CD8-positive, alpha-beta memory T cell (primary cell): ENCODE measurements at regions of chr1 and their contacts with region 1.

Region 1: GRCh38 chr1:28581536-28582247 is 10.4 kb upstream of the RAB42 start:
- DNase-seq: peak; percentile 86 to 95 (median 91)
- H3K4me3 ChIP-seq: peak overlapping the region; percentile 87
- H3K4me3 Mint-ChIP-seq: peak overlapping the region; percentile 93 to 99 (median 98)
- H3K27ac ChIP-seq: peak overlapping the region; percentile 89
- H3K27ac Mint-ChIP-seq: peak overlapping the region; percentile 84 to 98 (median 94)
- H3K4me1 ChIP-seq: peaks cover 31% of the 10 kb centered on the region
- H3K4me1 Mint-ChIP-seq: peaks cover 36 to 55% (median 52%) of the 10 kb centered on the region in 3 donors
- H3K27me3 ChIP-seq: no peaks in the 10 kb centered on the region
- H3K27me3 Mint-ChIP-seq: peaks cover 0 to 2% of the 10 kb centered on the region in 2 donors

Region 2: DNA sequence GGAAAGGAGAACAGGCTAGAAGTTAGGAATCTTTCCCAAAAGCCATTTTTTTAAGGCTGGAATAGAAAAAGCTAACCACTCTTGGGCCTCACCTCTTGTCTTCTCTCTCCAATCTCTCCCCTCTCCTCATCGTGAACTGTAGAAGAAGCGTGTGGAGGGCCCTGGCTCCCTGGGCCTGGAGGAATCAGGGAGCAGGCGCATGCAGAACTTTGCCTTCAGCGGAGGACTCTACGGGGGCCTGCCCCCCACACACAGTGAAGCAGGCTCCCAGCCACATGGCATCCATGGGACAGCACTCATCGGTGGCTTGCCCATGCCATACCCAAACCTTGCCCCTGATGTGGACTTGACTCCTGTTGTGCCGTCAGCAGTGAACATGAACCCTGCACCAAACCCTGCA is 731.7 kb before region 1 on chr1:
- CTCF ChIA-PET with region 1: no interaction called
- POLR2A ChIA-PET with region 1: no interaction called
- DNase-seq: peak in 1 of 5 donors; percentile 15
- H3K4me3 ChIP-seq: no peak overlapping the region
- H3K4me3 Mint-ChIP-seq: no peak overlapping the region
- H3K27ac ChIP-seq: no peak overlapping the region
- H3K27ac Mint-ChIP-seq: peak overlapping the region in 2 of 8 donors; percentile 11 to 37
- H3K4me1 ChIP-seq: no peaks in the 10 kb centered on the region
- H3K4me1 Mint-ChIP-seq: no peaks in the 10 kb centered on the region
- H3K27me3 ChIP-seq: no peaks in the 10 kb centered on the region
- H3K27me3 Mint-ChIP-seq: no peaks in the 10 kb centered on the region

Region 3: DNA sequence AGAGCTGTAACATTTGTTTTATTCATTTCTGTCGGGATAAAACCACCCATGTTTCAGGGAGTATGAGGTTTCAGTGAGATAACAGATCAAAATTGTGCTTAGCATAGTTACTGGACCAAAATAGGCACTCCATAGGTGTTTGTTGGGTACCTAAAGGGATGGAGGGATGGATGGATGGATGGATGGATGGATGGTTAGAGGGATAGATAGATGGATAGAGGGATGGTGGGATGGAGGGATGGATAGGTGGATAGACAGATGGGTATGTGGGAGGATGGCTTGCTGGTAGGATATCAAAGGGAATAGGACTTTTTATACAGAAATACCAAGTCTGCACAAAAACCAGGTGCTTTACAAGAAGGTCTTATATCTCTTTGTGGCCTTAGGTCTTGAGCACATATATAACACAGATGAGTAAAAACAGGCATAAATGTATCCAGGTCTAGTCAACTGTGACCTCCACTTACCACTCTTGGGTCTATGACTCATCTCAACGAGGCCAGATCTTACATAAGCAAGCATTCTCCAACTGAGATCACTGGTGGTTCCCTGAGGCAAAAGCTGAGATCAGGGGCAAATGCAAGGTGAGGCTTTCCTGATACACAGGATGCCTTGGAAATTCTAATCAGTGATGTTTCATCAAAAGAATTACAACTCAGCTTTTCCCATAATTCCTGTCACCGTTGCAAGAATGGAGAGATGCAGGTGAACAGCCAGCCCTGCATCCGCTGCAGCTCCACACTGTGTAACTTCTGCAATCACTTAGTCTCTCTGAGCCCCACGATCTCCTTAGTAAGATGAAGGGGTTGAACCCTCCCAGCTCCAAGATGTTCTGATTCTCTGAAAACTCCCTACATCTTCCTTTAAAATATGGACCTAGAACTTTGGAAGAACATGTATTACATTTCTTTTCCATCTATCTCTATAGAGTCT is 437.2 kb before region 1 on chr1:
- CTCF ChIA-PET with region 1: no interaction called
- POLR2A ChIA-PET with region 1: no interaction called
- DNase-seq: no peak
- H3K4me3 ChIP-seq: no peak overlapping the region
- H3K4me3 Mint-ChIP-seq: no peak overlapping the region
- H3K27ac ChIP-seq: no peak overlapping the region
- H3K27ac Mint-ChIP-seq: peak overlapping the region in 1 of 8 donors; percentile 0
- H3K4me1 ChIP-seq: no peaks in the 10 kb centered on the region
- H3K4me1 Mint-ChIP-seq: peaks cover 0 to 4% (median 0%) of the 10 kb centered on the region in 3 donors
- H3K27me3 ChIP-seq: no peaks in the 10 kb centered on the region
- H3K27me3 Mint-ChIP-seq: no peaks in the 10 kb centered on the region

Region 4: GRCh38 chr1:28329395-28330153 is 252.1 kb before region 1 on chr1:
- CTCF ChIA-PET with region 1: no interaction called
- POLR2A ChIA-PET with region 1: interaction called, 10 read pairs
- DNase-seq: no peak
- H3K4me3 ChIP-seq: peak overlapping the region; percentile 85
- H3K4me3 Mint-ChIP-seq: peak overlapping the region; percentile 89 to 97 (median 91)
- H3K27ac ChIP-seq: peak overlapping the region; percentile 93
- H3K27ac Mint-ChIP-seq: peak overlapping the region; percentile 95 to 99 (median 98)
- H3K4me1 ChIP-seq: peaks cover 17% of the 10 kb centered on the region
- H3K4me1 Mint-ChIP-seq: peaks cover 26 to 42% (median 42%) of the 10 kb centered on the region in 3 donors
- H3K27me3 ChIP-seq: no peaks in the 10 kb centered on the region
- H3K27me3 Mint-ChIP-seq: peaks cover 0 to 5% of the 10 kb centered on the region in 2 donors

Region 5: GRCh38 chr1:28518000-28518744 is 63.5 kb before region 1 on chr1:
- CTCF ChIA-PET with region 1: interaction called, 16 read pairs
- POLR2A ChIA-PET with region 1: interaction called, 8 read pairs
- DNase-seq: peak; percentile 79 to 90 (median 83)
- H3K4me3 ChIP-seq: peak overlapping the region; percentile 78
- H3K4me3 Mint-ChIP-seq: peak overlapping the region; percentile 84 to 96 (median 89)
- H3K27ac ChIP-seq: peak overlapping the region; percentile 75
- H3K27ac Mint-ChIP-seq: peak overlapping the region; percentile 76 to 94 (median 87)
- H3K4me1 ChIP-seq: peaks cover 18% of the 10 kb centered on the region
- H3K4me1 Mint-ChIP-seq: peaks cover 26 to 28% (median 27%) of the 10 kb centered on the region in 3 donors
- H3K27me3 ChIP-seq: no peaks in the 10 kb centered on the region
- H3K27me3 Mint-ChIP-seq: peaks cover 0 to 3% of the 10 kb centered on the region in 2 donors

Region 6: GRCh38 chr1:28631713-28632112 is 50.0 kb after region 1 on chr1:
- CTCF ChIA-PET with region 1: no interaction called
- POLR2A ChIA-PET with region 1: no interaction called
- DNase-seq: no peak
- H3K4me3 ChIP-seq: no peak overlapping the region
- H3K4me3 Mint-ChIP-seq: no peak overlapping the region
- H3K27ac ChIP-seq: no peak overlapping the region
- H3K27ac Mint-ChIP-seq: peak overlapping the region in 2 of 8 donors; percentile 21 to 54
- H3K4me1 ChIP-seq: no peaks in the 10 kb centered on the region
- H3K4me1 Mint-ChIP-seq: peaks cover 8 to 20% (median 12%) of the 10 kb centered on the region in 3 donors
- H3K27me3 ChIP-seq: no peaks in the 10 kb centered on the region
- H3K27me3 Mint-ChIP-seq: no peaks in the 10 kb centered on the region

Region 7: DNA sequence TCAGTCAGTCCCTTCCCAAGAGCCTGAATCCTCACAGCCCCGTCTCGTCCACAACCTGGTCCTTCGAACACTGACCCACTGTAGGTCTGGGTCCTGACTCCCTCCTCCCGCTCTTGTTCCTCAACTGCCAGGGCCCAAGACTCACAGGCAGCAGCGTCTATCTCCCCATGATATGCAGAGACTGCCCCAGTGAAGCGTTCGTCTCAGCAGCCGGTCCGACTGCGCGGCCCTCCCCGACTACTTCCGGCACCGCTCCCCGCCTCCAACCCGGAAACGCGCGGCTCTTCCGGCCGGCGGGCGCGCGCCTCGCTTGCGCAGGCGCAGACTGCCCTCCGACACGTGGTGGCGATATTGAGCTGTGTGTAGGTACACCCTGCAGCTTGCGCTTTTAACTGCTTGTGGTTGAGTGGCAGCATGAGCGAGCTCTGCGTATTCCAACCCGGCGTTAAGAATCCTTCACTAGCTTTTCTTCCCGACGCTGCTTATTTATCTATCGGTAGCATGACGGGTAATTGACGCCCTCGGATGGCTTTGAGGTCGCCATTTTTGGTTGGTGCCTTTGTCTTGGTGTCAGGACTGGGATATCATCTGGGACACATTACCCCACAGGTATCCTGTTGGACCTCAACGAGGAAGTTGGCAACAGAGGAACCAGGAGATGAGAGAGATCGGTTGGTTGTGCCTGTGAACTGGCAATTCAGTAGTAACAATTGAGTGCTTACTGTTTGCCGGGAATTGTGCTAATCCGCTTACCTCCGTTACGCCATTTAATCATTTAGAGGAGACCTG is 61.3 kb after region 1 on chr1 and contains the start of gene TAF12:
- CTCF ChIA-PET with region 1: interaction called, 7 read pairs
- POLR2A ChIA-PET with region 1: interaction called, 49 read pairs
- DNase-seq: peak; percentile 86 to 95 (median 89)
- H3K4me3 ChIP-seq: peak within 1 kb of the TSS; percentile 98
- H3K4me3 Mint-ChIP-seq: peak within 1 kb of the TSS; percentile 94 to 99 (median 98)
- H3K27ac ChIP-seq: peak within 1 kb of the TSS; percentile 91
- H3K27ac Mint-ChIP-seq: peak within 1 kb of the TSS; percentile 91 to 100 (median 98)
- H3K4me1 ChIP-seq: peaks cover 40% of the 10 kb centered on the region
- H3K4me1 Mint-ChIP-seq: peaks cover 46 to 67% (median 56%) of the 10 kb centered on the region in 3 donors
- H3K27me3 ChIP-seq: no peaks in the 10 kb centered on the region
- H3K27me3 Mint-ChIP-seq: peaks cover 0 to 4% of the 10 kb centered on the region in 2 donors
- total RNA-seq, gene TAF12: 37.8 to 39.0 TPM

Region 8: DNA sequence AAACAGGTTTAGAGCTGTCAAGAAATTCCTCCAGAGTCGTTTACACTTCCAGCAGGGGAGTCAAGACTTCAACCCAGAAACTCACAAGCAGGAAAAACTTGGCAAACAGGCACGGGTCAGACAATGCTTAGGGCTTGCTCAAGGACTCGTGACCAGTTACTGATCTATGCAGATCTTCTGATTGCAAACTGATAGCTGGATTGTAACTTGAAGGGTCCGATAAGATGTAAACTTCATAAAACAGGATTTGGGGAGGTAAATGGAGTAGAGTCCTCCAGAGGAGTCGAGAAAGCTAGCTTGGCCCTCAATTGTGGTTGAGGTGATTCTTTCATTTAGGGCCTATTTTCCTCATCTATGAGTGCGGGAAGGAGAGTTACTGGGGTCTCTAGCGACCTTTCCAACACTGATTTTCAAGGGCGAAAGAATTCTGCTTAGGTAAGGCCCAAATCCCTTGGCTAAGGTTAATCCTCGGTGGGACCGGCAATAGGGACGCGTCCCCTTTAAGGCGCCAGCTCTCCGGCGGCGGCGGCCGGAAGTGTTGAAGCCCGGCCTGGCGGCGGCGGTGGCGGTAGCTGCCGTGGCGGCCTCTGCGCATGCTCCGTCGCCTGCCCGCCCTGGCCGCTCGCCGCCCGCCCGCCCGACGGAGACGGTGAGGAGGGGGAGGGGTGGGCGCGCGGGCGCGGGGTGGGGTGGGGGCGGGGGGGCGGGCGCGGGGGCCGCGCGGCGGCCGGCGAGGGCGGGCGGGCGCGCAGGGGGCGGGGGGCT is 86.7 kb after region 1 on chr1 and contains the start of gene GMEB1:
- CTCF ChIA-PET with region 1: interaction called, 10 read pairs
- POLR2A ChIA-PET with region 1: interaction called, 24 read pairs
- DNase-seq: peak; percentile 76 to 90 (median 82)
- H3K4me3 ChIP-seq: peak within 1 kb of the TSS; percentile 93
- H3K4me3 Mint-ChIP-seq: peak within 1 kb of the TSS; percentile 92 to 97 (median 95)
- H3K27ac ChIP-seq: peak within 1 kb of the TSS; percentile 94
- H3K27ac Mint-ChIP-seq: peak within 1 kb of the TSS; percentile 97 to 100 (median 99)
- H3K4me1 ChIP-seq: peaks cover 5% of the 10 kb centered on the region
- H3K4me1 Mint-ChIP-seq: peaks cover 17 to 30% (median 23%) of the 10 kb centered on the region in 3 donors
- H3K27me3 ChIP-seq: no peaks in the 10 kb centered on the region
- H3K27me3 Mint-ChIP-seq: peaks cover 0 to 1% of the 10 kb centered on the region in 2 donors
- total RNA-seq, gene GMEB1: 21.3 to 21.8 TPM

Region 9: DNA sequence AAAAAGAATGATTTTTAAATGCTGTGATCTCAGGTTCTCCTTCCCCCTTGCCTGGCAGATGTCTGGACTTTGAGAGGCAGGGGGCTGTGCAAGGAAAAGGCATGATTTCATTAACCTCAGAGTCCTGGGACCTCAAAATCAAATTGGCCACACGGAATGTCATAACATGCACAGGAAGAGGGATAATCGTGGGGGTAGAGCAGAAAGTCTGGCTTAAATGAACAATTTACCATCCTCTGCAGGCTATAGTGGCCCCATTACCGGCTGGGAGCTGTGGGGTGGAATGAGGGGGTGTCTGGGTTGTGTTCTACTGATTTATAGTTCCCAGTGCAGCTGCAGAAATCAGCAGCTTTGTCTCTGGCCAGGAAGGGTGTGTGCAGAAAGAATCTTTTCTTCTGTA is 241.1 kb after region 1 on chr1:
- CTCF ChIA-PET with region 1: no interaction called
- POLR2A ChIA-PET with region 1: no interaction called
- DNase-seq: no peak
- H3K4me3 ChIP-seq: no peak overlapping the region
- H3K4me3 Mint-ChIP-seq: no peak overlapping the region
- H3K27ac ChIP-seq: no peak overlapping the region
- H3K27ac Mint-ChIP-seq: peak overlapping the region in 1 of 8 donors; percentile 92
- H3K4me1 ChIP-seq: no peaks in the 10 kb centered on the region
- H3K4me1 Mint-ChIP-seq: no peaks in the 10 kb centered on the region
- H3K27me3 ChIP-seq: no peaks in the 10 kb centered on the region
- H3K27me3 Mint-ChIP-seq: peaks cover 4 to 13% of the 10 kb centered on the region in 2 donors

Region 10: DNA sequence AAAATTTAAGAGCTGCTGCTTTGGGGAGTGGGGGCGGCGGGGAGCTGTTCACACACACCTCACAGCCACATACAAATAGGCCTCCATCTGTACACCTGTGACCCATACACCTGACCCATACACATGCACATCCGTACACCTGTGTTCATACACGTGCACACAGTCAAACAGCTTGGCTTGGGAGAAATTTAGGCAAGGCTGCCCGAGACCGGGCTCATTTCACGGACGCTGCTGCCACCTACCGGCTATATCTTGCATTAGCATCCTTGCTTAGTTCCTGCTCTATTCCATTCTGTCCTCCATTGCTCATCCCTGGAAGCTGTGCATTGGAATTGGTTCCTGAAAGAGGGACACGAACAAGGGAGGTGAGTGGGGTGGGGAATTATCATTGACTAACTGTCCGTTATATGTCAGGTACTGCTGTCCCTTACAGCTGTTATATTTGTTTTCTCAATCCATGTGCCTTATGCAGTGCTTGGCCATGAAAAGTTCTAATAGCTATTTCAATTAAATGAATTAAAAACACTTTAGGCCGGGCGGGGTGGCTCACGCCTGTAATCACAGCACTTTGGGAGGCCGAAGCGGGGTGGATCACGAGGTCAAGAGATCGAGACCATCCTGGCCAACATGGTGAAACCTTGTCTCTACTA is 295.6 kb after region 1 on chr1:
- CTCF ChIA-PET with region 1: interaction called, 12 read pairs
- POLR2A ChIA-PET with region 1: interaction called, 5 read pairs
- DNase-seq: peak; percentile 63 to 81 (median 68)
- H3K4me3 ChIP-seq: no peak overlapping the region
- H3K4me3 Mint-ChIP-seq: no peak overlapping the region
- H3K27ac ChIP-seq: no peak overlapping the region
- H3K27ac Mint-ChIP-seq: peak overlapping the region in 1 of 8 donors; percentile 41
- H3K4me1 ChIP-seq: peaks cover 6% of the 10 kb centered on the region
- H3K4me1 Mint-ChIP-seq: peaks cover 8 to 11% (median 10%) of the 10 kb centered on the region in 3 donors
- H3K27me3 ChIP-seq: no peaks in the 10 kb centered on the region
- H3K27me3 Mint-ChIP-seq: peaks cover 2 to 15% of the 10 kb centered on the region in 2 donors